ENCODE measurements at regions of chr7 and their contacts with region 1.

Region 1: DNA sequence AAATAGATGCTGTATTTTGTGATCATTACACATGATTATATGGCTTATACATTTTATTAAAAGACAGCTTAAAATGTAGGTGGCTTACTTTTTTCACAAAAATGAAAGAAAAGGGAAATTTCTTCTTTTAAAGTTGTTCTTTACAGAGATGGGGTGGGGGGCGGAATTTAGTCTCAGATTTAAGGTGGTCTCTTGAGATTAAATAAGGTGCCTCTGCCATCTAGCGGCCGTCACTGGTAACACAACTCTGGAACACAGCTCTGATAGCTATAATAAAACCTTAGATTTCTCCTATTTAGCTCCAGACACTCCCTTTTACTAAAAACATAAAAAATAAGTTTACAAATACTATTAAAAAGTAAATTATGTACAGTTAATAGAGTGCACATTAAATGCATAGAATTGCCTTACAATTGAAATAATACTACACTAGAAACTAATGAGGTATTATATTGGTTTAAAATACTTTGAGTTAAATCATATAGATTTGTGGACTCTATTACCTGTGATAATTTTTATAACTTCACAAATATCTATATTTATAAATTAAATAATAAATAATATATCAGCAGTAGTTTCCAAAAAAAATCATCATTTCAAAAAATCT is 210.9 kb downstream of the DGKB start:
- DNase-seq: no peak
- H3K4me3 ChIP-seq: no peak overlapping the region
- H3K27me3 ChIP-seq: no peaks in the 10 kb centered on the region
- CTCF ChIP-seq: peak; percentile 83

Region 2: DNA sequence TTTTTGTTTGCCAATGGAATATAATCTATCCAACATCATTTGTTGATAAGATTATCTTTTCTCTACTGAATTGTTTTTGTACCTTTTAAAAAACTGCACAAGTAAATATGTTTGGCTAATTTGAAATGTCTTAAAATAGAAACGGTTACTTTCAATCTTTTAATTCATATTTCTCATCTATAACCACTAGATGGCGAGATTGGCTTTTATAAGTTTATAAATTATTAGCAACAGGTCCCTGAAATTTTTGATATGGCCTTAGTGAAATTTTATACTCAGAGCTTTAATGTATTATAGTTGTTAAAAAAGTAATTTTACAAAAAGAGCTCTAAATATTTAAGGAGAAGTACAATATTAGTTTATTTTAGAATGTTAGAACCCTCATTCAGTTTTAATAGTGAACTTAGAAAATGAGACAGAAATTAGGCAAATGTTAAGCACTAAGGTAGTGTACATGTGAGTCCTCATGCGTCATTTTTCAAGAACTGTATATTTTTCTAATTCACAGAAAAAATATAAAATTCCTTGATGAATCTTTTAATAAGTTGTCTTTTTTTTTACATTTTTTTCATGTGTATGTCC is 1411.8 kb before region 1 on chr7:
- CTCF ChIA-PET with region 1: interaction called, 42 read pairs
- POLR2A ChIA-PET with region 1: no interaction called
- DNase-seq: no peak
- H3K4me3 ChIP-seq: no peak overlapping the region
- H3K27me3 ChIP-seq: no peaks in the 10 kb centered on the region
- CTCF ChIP-seq: peak; percentile 27

Region 3: DNA sequence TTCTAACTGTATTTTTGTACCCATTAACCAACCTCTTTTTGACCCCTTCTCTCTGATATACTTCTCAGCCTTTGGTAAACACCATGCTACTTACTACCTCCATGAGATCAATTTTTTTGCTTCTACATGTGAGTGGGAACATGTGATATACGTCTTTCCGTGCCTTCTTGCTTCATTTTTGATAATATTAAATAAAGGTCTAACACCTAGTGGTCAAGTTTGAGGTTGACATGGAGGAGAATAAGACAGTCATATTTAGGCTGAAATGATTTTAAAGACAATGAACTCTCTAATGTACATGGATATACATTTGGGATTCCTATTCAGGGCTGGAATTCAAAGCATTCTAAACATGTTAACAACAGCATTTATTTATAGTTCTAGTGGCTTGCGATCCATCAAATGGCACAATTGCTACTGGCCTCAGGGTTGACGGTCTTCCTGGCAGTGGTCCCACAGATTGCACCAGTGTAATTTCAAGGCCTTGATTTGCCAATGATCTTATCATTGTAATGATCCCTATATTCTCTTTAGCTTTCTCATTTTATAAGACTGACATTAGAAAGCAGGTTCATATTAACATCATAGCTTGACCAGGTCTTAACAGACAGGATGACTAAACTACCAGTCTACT is 386.4 kb before region 1 on chr7:
- CTCF ChIA-PET with region 1: no interaction called
- POLR2A ChIA-PET with region 1: no interaction called
- DNase-seq: no peak
- H3K4me3 ChIP-seq: no peak overlapping the region
- H3K27me3 ChIP-seq: no peaks in the 10 kb centered on the region
- CTCF ChIP-seq: no peak

Region 4: DNA sequence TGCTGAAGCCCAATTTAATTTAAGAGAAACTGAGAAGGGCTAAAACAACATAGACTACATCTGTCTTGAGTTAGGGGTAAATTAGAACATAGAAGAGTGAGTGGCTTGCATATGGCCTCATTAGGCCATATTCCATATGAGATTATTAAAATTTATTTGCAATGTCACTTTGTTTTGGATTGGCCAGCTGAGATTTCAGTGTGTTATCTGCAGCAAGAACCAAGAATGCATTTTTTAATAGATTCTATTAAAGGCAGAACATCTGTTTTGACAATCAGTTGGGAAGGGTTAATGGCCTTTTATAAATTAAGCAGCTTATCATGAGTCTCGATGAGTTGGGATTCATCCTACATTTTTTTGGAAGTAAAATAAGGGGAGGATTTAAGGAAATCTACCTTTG is 25.4 kb before region 1 on chr7:
- CTCF ChIA-PET with region 1: interaction called, 3 read pairs
- POLR2A ChIA-PET with region 1: interaction called, 28 read pairs
- DNase-seq: no peak
- H3K4me3 ChIP-seq: no peak overlapping the region
- H3K27me3 ChIP-seq: no peaks in the 10 kb centered on the region
- CTCF ChIP-seq: no peak

Region 5: DNA sequence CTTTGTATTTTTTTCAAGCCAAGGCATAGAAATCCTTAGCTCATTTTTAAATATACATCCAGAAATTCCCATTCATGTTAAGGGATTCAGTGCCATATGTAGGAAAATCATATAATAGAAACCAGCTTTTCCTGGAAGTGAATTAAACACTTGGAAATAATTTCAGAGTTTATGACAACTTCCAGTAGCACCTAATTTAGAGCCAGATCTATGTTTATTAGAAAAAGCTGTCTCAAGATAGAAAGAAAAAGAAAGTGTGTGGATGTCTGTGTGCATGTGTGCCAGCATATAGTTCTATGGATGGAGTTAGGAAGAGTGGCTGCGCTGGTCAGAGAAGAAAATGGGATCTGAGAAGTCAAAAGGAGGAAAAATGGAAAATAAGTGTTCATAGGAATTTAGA is 14.8 kb before region 1 on chr7:
- CTCF ChIA-PET with region 1: interaction called, 24 read pairs
- POLR2A ChIA-PET with region 1: no interaction called
- DNase-seq: no peak
- H3K4me3 ChIP-seq: no peak overlapping the region
- H3K27me3 ChIP-seq: no peaks in the 10 kb centered on the region
- CTCF ChIP-seq: no peak